ENCODE measurements at regions of chr14 and their contacts with region 1.

Region 1: DNA sequence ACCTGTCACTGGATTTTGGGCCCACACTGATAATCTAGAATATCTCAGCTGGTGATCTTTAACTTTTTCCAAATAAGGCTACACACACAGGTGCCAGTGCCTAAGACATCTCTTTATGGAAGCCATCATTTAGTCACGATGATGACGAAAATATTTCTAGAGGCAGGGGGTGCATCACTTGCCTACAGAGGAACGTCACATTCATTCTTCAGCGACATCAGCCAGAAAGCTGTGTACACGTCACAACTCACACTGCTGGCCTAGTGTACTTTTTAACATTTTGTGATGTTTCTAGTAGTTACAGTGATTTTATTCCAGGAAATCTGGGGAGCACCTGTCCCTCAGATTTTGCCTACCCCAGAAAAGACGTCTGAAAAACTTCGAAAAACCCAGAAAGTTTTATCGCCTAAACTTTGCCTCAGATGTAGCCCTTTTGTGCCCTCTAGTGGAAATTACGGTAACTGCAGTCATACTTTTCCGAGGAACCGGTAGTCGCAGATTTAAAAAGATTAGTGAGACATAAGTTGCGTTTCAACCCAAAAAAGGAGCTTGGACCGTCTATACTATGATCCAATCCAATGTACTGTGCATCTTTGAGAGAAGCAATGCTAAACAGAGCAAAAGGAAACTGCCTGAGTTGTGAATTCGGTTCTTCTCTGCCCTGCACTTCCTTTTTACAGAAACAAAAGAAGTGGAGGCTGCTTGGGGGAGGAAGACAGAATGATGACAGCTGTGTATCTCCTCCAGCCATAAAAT is 64.3 kb upstream of the STON2 start:
- DNase-seq: peak; percentile 66
- H3K4me3 ChIP-seq: peak overlapping the region; percentile 43 to 74
- H3K27ac ChIP-seq: no peak overlapping the region
- H3K4me1 ChIP-seq: no peaks in the 10 kb centered on the region
- H3K27me3 ChIP-seq: no peaks in the 10 kb centered on the region
- CTCF ChIP-seq: peak; percentile 90
- EP300 ChIP-seq: no peak
- RAD21 ChIP-seq: peak; percentile 84

Region 2: GRCh38 chr14:81261176-81261575 is 203.2 kb before region 1 on chr14:
- CTCF ChIA-PET with region 1: interaction called, 43 read pairs
- POLR2A ChIA-PET with region 1: no interaction called
- DNase-seq: no peak
- H3K4me3 ChIP-seq: no peak overlapping the region
- H3K27ac ChIP-seq: no peak overlapping the region
- H3K4me1 ChIP-seq: no peaks in the 10 kb centered on the region
- H3K27me3 ChIP-seq: no peaks in the 10 kb centered on the region
- CTCF ChIP-seq: no peak
- EP300 ChIP-seq: no peak
- RAD21 ChIP-seq: no peak

Region 3: GRCh38 chr14:81447021-81447764 is 17.2 kb before region 1 on chr14:
- CTCF ChIA-PET with region 1: interaction called, 106 read pairs
- POLR2A ChIA-PET with region 1: no interaction called
- DNase-seq: no peak
- H3K4me3 ChIP-seq: no peak overlapping the region
- H3K27ac ChIP-seq: no peak overlapping the region
- H3K4me1 ChIP-seq: peaks cover 0 to 4% of the 10 kb centered on the region in 2 experiments; a peak in 1 of 4 replicates
- H3K27me3 ChIP-seq: no peaks in the 10 kb centered on the region; the same call in 1 of the 2 replicates
- CTCF ChIP-seq: no peak
- EP300 ChIP-seq: no peak
- RAD21 ChIP-seq: no peak

Region 4: GRCh38 chr14:81484120-81484519 is 19.7 kb after region 1 on chr14:
- CTCF ChIA-PET with region 1: interaction called, 32 read pairs
- POLR2A ChIA-PET with region 1: no interaction called
- DNase-seq: no peak
- H3K4me3 ChIP-seq: no peak overlapping the region
- H3K27ac ChIP-seq: no peak overlapping the region
- H3K4me1 ChIP-seq: no peaks in the 10 kb centered on the region
- H3K27me3 ChIP-seq: no peaks in the 10 kb centered on the region
- CTCF ChIP-seq: no peak
- EP300 ChIP-seq: no peak
- RAD21 ChIP-seq: no peak

Region 5: GRCh38 chr14:81737938-81738337 is 273.5 kb after region 1 on chr14:
- CTCF ChIA-PET with region 1: no interaction called
- POLR2A ChIA-PET with region 1: no interaction called
- DNase-seq: no peak
- H3K4me3 ChIP-seq: no peak overlapping the region
- H3K27ac ChIP-seq: no peak overlapping the region
- H3K4me1 ChIP-seq: no peaks in the 10 kb centered on the region
- H3K27me3 ChIP-seq: no peaks in the 10 kb centered on the region
- CTCF ChIP-seq: no peak
- EP300 ChIP-seq: no peak
- RAD21 ChIP-seq: no peak